Calu3 (cell line): ENCODE measurements at regions of chr11 and their contacts with region 1.

Region 1: GRCh38 chr11:31233424-31233823 is 136.1 kb downstream of the DCDC1 start:
- DNase-seq: no peak
- H3K4me3 Mint-ChIP-seq: no peak overlapping the region
- H3K27ac Mint-ChIP-seq: no peak overlapping the region
- H3K4me1 Mint-ChIP-seq: no peaks in the 10 kb centered on the region
- H3K27me3 Mint-ChIP-seq: no peaks in the 10 kb centered on the region
- CTCF ChIP-seq: peak; percentile 41

Region 2: GRCh38 chr11:31107062-31107461 is 126.4 kb before region 1 on chr11:
- CTCF ChIA-PET with region 1: interaction called, 16 read pairs
- intact Hi-C with region 1: loop called (anchors 1 kb)
- DNase-seq: peak; percentile 73
- H3K4me3 Mint-ChIP-seq: no peak overlapping the region
- H3K27ac Mint-ChIP-seq: no peak overlapping the region
- H3K4me1 Mint-ChIP-seq: no peaks in the 10 kb centered on the region
- H3K27me3 Mint-ChIP-seq: no peaks in the 10 kb centered on the region
- CTCF ChIP-seq: peak; percentile 78